MCF 10A (cell line): ENCODE measurements at regions of chr3 and their contacts with region 1.

Region 1: DNA sequence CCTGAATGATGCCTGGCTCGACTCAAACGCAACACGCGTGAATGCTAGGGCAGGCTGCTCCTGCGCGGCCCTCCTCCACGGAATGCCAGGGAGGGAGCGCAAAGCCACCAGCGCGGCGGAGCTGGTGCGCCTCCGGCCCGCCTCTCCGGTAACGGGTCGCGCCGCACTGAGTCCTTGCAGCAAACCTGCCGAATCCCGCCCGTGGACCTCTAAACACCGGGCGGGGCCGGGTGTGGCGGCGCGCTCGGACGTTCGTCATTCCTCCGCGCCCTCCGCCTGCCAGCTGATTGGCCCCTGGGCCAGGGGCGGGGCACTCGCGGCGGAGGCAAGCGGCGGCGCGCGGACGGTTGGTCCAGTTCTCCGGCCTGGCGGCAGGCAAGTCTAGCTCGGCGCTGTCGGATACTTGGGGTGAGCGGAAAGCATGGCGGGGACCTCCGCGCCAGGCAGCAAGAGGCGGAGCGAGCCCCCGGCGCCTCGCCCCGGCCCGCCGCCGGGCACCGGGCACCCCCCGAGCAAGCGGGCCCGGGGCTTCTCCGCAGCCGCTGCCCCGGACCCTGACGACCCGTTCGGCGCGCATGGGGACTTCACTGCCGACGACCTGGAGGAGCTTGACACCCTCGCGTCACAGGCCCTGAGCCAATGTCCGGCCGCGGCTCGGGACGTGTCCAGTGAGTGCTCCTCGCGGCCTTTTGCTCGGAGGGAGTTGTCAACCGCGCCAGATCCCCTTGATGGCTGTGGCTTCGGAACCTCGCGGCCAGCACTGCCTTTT is at the start of gene ATRIP:
- DNase-seq: peak; percentile 87
- H3K4me3 Mint-ChIP-seq: peak within 1 kb of the TSS; percentile 96
- H3K27ac Mint-ChIP-seq: peak within 1 kb of the TSS; percentile 73
- H3K4me1 Mint-ChIP-seq: peaks cover 25% of the 10 kb centered on the region
- H3K27me3 Mint-ChIP-seq: no peaks in the 10 kb centered on the region
- CTCF ChIP-seq: no peak
- total RNA-seq, gene ATRIP: 8.6 and 9.1 TPM in 2 replicates

Region 2: GRCh38 chr3:47932421-47932820 is 514.2 kb before region 1 on chr3:
- CTCF ChIA-PET with region 1: no interaction called
- POLR2A ChIA-PET with region 1: no interaction called
- intact Hi-C with region 1: no loop called
- DNase-seq: no peak
- H3K4me3 Mint-ChIP-seq: no peak overlapping the region
- H3K27ac Mint-ChIP-seq: no peak overlapping the region
- H3K4me1 Mint-ChIP-seq: peaks cover 9% of the 10 kb centered on the region
- H3K27me3 Mint-ChIP-seq: no peaks in the 10 kb centered on the region
- CTCF ChIP-seq: no peak

Region 3: DNA sequence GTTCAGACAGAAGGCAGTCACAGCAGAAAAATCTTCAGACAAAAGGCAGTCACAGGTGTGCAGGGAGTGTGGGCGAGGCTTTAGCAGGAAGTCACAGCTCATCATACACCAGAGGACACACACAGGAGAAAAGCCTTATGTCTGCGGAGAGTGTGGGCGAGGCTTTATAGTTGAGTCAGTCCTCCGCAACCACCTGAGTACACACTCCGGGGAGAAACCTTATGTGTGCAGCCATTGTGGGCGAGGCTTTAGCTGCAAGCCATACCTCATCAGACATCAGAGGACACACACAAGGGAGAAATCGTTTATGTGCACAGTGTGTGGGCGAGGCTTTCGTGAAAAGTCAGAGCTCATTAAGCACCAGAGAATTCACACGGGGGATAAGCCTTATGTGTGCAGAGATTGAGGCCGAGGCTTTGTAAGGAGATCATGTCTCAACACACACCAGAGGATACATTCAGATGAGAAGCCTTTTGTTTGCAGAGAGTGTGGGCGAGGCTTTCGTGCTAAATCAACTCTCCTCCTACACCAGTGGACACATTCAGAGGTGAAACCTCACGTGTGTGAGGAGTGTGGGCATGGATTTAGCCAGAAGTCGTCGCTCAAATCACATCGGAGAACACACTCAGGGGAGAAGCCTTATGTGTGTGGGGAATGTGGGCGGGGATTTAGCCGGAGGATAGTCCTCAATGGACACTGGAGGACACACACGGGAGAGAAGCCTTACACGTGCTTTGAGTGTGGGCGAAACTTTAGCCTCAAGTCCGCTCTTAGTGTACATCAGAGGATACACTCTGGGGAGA is 178.0 kb before region 1 on chr3:
- CTCF ChIA-PET with region 1: interaction called, 3 read pairs
- POLR2A ChIA-PET with region 1: interaction called, 39 read pairs
- intact Hi-C with region 1: no loop called
- DNase-seq: peak; percentile 86
- H3K4me3 Mint-ChIP-seq: peak overlapping the region; percentile 69
- H3K27ac Mint-ChIP-seq: peak overlapping the region; percentile 83
- H3K4me1 Mint-ChIP-seq: peaks cover 29% of the 10 kb centered on the region
- H3K27me3 Mint-ChIP-seq: no peaks in the 10 kb centered on the region
- CTCF ChIP-seq: no peak

Region 4: GRCh38 chr3:48459331-48459730 is 12.7 kb after region 1 on chr3:
- CTCF ChIA-PET with region 1: interaction called, 6 read pairs
- POLR2A ChIA-PET with region 1: interaction called, 12 read pairs
- intact Hi-C with region 1: no loop called
- DNase-seq: no peak
- H3K4me3 Mint-ChIP-seq: no peak overlapping the region
- H3K27ac Mint-ChIP-seq: no peak overlapping the region
- H3K4me1 Mint-ChIP-seq: no peaks in the 10 kb centered on the region
- H3K27me3 Mint-ChIP-seq: no peaks in the 10 kb centered on the region
- CTCF ChIP-seq: no peak

Region 5: GRCh38 chr3:48472915-48473616 is 26.5 kb after region 1 on chr3:
- CTCF ChIA-PET with region 1: interaction called, 5 read pairs
- POLR2A ChIA-PET with region 1: interaction called, 28 read pairs
- intact Hi-C with region 1: no loop called
- DNase-seq: peak; percentile 93
- H3K4me3 Mint-ChIP-seq: peak overlapping the region; percentile 89
- H3K27ac Mint-ChIP-seq: peak overlapping the region; percentile 98
- H3K4me1 Mint-ChIP-seq: peaks cover 10% of the 10 kb centered on the region
- H3K27me3 Mint-ChIP-seq: no peaks in the 10 kb centered on the region
- CTCF ChIP-seq: peak; percentile 23

Region 6: DNA sequence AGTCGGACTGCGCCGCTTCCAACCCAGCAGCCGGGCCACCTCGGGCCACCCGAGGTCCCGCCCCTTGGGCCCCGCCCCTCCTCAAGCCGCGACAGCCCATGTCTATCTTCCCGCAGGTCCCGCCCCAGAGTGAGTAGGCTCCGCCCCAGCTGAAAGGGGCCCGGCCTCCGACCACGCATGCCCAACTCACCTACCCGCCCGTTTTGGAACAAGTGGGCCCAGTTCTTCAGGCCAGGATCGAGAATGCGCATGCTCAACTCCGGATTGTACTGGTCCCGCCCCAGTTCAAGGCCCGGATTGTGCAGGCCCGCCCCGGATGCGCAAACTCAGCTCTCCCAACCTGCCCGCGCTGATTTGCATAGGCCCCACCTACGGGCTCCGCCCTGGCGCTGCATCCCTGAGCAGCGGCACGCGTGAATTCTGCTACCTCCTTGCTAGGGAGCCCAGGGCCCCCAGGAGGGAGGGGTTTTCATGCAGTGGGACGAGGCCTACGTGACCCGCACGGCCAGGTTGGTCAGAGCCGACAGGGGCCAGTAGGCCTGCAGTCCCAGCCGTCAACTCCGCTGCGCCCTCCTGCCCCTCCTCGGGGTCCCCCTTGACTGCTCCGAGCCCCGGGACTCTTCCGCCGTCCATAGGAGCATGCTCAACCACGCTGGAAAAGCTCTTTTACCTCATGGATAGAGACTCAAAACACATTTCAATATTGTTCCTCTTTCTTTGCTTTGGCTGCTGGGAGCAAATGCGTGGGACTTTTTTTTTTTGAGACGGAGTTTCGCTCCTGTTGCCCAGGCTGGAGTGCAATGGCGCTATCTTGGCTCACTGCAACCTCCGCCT is 110.4 kb after region 1 on chr3 and contains the start of gene PFKFB4:
- CTCF ChIA-PET with region 1: interaction called, 3 read pairs
- POLR2A ChIA-PET with region 1: interaction called, 15 read pairs
- intact Hi-C with region 1: no loop called
- DNase-seq: peak; percentile 99
- H3K4me3 Mint-ChIP-seq: peak within 1 kb of the TSS; percentile 74
- H3K27ac Mint-ChIP-seq: peak within 1 kb of the TSS; percentile 47
- H3K4me1 Mint-ChIP-seq: peaks cover 11% of the 10 kb centered on the region
- H3K27me3 Mint-ChIP-seq: no peaks in the 10 kb centered on the region
- CTCF ChIP-seq: no peak
- total RNA-seq, gene PFKFB4: 3.4 and 4.6 TPM in 2 replicates